ENCODE measurements at regions of chr22 and their contacts with region 1.

Region 1: GRCh38 chr22:41403532-41404318 is 22.0 kb downstream of the TEF start:
- DNase-seq: peak; percentile 92
- ATAC-seq: peak; percentile 100
- H3K4me3 Mint-ChIP-seq: peak overlapping the region; percentile 1
- H3K27ac Mint-ChIP-seq: peak overlapping the region; percentile 58
- H3K4me1 Mint-ChIP-seq: peaks cover 12% of the 10 kb centered on the region
- H3K27me3 Mint-ChIP-seq: no peaks in the 10 kb centered on the region

Region 2: DNA sequence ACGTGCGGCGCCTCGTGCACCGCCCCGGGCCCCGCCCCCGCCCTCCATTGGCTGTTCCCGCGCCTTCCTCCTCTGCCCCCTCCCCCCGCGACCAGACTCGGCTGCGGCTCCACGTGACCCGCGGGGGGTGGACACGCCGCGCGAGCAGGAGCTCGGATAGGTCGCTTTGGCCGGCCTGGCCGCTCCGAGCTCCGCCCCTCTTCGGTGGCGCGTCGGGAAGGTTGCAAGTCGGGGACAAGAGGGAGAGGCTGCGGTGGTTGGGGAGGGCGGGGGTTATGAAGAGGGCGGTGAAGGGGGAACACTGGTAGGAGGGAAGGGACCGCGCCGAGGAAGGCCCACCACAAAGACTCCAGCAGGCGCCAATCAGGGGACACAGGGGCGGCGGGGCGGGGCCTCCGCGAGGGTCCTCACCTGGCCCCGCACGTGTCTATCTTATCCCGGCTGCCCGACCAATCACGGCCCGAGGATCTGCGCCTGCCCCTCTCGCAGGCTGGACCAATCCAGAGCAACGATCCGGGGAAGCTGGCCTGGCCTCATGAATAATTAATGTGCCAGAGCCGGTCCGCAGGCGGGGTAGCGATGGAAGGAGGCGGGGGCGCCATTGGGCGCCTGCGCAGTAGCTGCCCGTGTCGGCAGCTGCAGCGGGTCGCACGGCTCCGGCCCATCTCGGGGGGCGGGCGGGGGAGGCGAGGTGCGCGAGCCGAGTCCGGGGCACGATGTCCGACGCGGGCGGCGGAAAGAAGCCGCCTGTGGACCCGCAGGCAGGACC is 22.2 kb before region 1 on chr22 and contains the start of gene TEF:
- CTCF ChIA-PET with region 1: interaction called, 31 read pairs
- DNase-seq: peak; percentile 99
- ATAC-seq: peak; percentile 93
- H3K4me3 Mint-ChIP-seq: peak within 1 kb of the TSS; percentile 78
- H3K27ac Mint-ChIP-seq: peak within 1 kb of the TSS; percentile 92
- H3K4me1 Mint-ChIP-seq: peaks cover 7% of the 10 kb centered on the region
- H3K27me3 Mint-ChIP-seq: peaks cover 5% of the 10 kb centered on the region
- total RNA-seq, gene TEF: 1.4 to 2.0 TPM

Region 3: DNA sequence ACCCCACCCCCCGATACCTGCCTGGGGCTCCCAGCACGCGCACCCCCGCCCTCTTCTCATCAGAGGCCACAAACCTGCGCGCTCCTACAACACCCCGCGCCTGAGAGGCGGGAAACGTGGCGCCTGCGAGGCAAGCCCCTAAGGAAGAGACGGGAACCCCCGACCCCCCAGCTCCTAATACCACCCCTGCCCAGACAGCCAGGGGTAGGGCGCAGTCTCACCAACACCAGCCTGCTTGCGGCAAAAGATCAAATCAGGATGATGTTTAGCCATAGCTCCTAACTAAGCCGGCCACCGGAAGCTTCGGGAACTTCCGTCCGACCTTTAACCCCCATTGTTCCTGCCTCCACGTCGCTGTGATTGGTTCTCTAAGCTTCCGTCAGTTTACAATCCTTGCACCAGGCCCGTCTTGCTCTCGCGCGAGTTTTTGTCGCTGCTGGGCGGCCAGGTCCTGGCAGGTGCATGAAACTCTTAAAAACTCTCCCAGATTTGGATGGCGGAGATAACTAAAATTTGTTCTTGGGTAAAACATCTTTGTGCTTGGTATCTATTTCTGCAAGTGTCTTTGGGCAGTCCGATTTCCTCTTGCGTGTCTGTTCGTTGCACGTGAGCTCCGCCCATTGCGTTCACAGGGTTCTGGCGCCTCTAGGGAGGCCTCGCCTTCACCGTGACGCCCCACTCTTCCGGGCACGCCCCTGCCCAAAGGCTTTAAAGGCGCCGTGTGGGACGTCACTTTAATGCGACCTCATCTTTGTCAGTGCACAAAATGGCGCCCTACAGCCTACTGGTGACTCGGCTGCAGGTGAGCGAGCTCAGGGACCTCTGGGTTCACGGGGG is 64.9 kb after region 1 on chr22 and contains the starts of genes ACO2 and PHF5A:
- CTCF ChIA-PET with region 1: interaction called, 18 read pairs
- DNase-seq: peak; percentile 99
- ATAC-seq: peak; percentile 92
- H3K4me3 Mint-ChIP-seq: peak within 1 kb of the TSS; percentile 80
- H3K27ac Mint-ChIP-seq: peak within 1 kb of the TSS; percentile 98
- H3K4me1 Mint-ChIP-seq: peaks cover 59% of the 10 kb centered on the region
- H3K27me3 Mint-ChIP-seq: no peaks in the 10 kb centered on the region
- total RNA-seq, gene ACO2: 90.0 to 93.3 TPM
- total RNA-seq, gene PHF5A: 54.5 to 75.0 TPM

Region 4: DNA sequence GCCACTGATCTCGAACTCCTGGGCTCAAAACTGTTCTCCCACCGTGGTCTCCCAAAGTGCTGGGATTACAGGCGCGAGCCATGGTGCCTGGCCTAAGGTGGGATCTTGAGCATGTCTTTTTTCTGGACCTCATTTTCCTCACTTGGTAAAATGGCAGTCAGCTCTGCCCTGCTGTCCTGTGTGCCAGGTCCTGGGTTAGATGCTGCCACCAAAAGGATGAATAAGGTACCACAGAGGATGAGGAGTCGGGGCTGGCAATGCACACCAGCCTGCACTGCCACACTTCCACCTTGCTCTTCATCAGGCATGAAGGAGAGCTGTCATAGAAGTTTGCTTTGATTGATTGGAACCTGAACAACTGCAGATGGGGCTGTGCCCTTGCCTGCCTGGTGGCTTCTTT is 97.5 kb after region 1 on chr22:
- CTCF ChIA-PET with region 1: interaction called, 45 read pairs
- DNase-seq: peak; percentile 50
- ATAC-seq: peak; percentile 76
- H3K4me3 Mint-ChIP-seq: no peak overlapping the region
- H3K27ac Mint-ChIP-seq: no peak overlapping the region
- H3K4me1 Mint-ChIP-seq: no peaks in the 10 kb centered on the region
- H3K27me3 Mint-ChIP-seq: no peaks in the 10 kb centered on the region

Region 5: GRCh38 chr22:41532908-41533825 is 129.4 kb after region 1 on chr22:
- CTCF ChIA-PET with region 1: interaction called, 18 read pairs
- DNase-seq: peak; percentile 79
- ATAC-seq: peak; percentile 89
- H3K4me3 Mint-ChIP-seq: no peak overlapping the region
- H3K27ac Mint-ChIP-seq: peak overlapping the region; percentile 24
- H3K4me1 Mint-ChIP-seq: no peaks in the 10 kb centered on the region
- H3K27me3 Mint-ChIP-seq: no peaks in the 10 kb centered on the region

Region 6: DNA sequence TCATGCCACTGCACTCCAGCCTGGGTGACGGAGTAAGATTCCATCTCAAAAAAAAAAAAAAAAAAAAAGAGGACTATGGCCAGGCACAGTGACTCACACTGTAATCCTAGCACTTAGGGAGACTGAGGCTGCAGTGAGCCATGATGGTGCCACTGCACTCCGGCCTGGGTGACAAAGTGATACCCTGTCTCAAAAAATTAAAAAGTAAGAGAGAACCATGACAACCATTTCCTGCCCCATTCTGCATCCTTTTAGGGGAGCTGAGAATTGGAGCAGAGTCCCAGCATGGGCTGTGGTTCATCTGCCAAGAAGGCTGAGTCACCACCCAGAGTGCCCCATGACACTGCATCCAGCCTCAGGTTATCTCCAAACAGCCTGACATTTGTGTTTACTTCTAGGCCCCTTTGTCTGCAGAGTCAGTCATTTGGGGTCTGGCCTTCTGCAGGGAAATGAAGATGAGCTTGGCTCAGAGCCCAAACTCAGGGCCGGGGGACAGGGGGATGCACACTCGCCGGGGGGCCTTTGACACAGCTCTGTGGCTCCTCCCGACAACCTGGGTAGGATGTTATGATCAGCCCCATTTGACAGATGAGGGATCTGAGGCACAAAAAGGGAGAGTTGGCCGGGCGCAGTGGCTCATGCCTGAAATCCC is 161.8 kb after region 1 on chr22:
- CTCF ChIA-PET with region 1: no interaction called
- DNase-seq: peak; percentile 71
- ATAC-seq: peak; percentile 91
- H3K4me3 Mint-ChIP-seq: no peak overlapping the region
- H3K27ac Mint-ChIP-seq: peak overlapping the region; percentile 19
- H3K4me1 Mint-ChIP-seq: peaks cover 11% of the 10 kb centered on the region
- H3K27me3 Mint-ChIP-seq: peaks cover 30% of the 10 kb centered on the region